Prostate gland (tissue), 2 donors: ENCODE measurements at regions of chr3 and their contacts with region 1.

Region 1: DNA sequence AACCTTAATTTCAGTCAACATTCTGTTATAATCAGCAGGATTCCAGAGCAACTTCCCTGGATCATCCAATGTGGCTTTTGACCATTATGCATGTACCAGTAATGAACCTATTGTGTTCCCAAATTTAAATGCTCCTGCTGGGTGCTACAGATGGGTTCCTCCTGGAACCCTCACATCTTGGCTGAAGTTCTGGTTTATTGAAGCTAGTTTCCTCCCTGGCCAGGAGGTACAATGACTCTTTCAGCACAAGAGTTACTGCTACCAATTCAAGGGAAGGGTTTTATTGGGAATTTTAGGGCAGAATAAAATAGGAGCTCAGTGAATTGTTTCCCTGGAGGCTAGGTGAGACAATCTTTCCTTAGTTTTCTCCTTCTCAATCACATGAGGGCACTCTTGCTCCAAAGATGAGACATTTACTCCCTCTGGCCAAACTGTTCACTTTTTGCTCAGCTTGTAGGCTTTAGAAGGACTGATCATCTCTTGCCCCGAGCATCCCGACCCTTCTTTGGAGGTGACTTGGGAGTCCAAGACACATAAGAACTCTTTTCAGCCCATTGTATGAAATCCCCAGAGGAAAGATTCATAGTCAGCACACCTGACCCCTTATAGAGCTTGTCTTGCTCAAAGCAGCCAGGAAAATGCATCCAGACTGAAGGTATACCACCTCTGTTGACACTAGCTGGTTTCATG is 8.8 kb upstream of the NPHP3 start:
- DNase-seq: no peak
- H3K4me3 ChIP-seq: no peak overlapping the region
- H3K27ac ChIP-seq: no peak overlapping the region
- H3K4me1 ChIP-seq: no peaks in the 10 kb centered on the region
- H3K27me3 ChIP-seq: no peaks in the 10 kb centered on the region
- CTCF ChIP-seq: peak in 3 of 4 experiments; percentile 21 to 31 (median 29)
- POLR2A ChIP-seq: no peak

Region 2: GRCh38 chr3:133384331-133385027 is 653.4 kb after region 1 on chr3:
- intact Hi-C with region 1: loop called (anchors 5 kb)
- DNase-seq: peak; percentile 48
- H3K4me3 ChIP-seq: no peak overlapping the region
- H3K27ac ChIP-seq: no peak overlapping the region
- H3K4me1 ChIP-seq: no peaks in the 10 kb centered on the region
- H3K27me3 ChIP-seq: no peaks in the 10 kb centered on the region
- CTCF ChIP-seq: peak; percentile 49 to 76 (median 69)
- POLR2A ChIP-seq: no peak

Region 3: GRCh38 chr3:133426721-133427120 is 695.7 kb after region 1 on chr3:
- intact Hi-C with region 1: loop called (anchors 2 kb)
- DNase-seq: no peak
- H3K4me3 ChIP-seq: no peak overlapping the region
- H3K27ac ChIP-seq: no peak overlapping the region
- H3K4me1 ChIP-seq: no peaks in the 10 kb centered on the region
- H3K27me3 ChIP-seq: no peaks in the 10 kb centered on the region
- CTCF ChIP-seq: no peak
- POLR2A ChIP-seq: no peak